ENCODE measurements at regions of chr1 and their contacts with region 1.

Region 1: DNA sequence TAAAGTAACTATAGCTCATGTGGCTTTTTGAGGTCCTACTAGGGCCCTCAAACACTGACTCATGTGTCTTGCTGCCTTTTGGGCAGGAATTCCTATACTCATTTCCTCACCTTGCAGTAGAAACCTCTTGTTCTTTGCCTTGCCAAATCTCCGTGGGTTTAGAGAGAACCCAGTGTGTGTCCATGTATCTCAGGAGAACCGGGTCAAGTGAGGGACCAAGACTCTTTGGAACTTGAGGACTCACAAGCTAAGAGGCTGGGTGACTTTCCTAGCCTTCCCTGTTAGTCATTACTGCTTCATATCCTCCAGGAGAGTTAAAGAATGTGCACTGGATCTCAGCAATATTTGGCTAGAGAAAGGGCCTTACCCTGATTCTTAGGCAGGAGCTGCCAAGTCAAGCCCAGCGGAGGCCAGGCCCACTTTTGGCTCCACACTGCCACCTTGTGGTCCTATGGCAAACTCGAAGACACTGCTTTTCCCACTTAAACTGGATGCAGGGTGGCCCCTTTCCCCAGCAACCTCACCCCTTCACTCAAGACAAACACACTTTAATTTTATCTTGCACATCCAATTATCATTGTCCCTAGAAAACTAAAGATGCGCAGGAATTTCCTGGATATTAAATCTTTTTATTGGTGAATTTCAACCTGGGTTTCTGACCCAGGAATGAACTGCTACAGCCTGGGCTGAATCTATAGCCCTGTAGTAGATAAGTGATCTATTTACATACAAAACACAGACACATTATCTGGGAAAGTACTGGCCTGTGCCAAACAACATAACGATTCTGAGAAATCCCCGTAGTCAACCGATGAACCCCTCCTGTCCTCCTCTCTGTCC is 10.6 kb downstream of the AVPR1B start:
- DNase-seq: peak; percentile 62 to 87
- ATAC-seq: peak; percentile 72 to 91 (median 83)
- H3K4me3 ChIP-seq: no peak overlapping the region
- H3K4me3 Mint-ChIP-seq: no peak overlapping the region
- H3K27ac ChIP-seq: no peak overlapping the region
- H3K27ac Mint-ChIP-seq: no peak overlapping the region
- H3K4me1 ChIP-seq: no peaks in the 10 kb centered on the region
- H3K4me1 Mint-ChIP-seq: no peaks in the 10 kb centered on the region
- H3K27me3 ChIP-seq: no peaks in the 10 kb centered on the region
- H3K27me3 Mint-ChIP-seq: peaks cover 8 to 12% of the 10 kb centered on the region in 2 donors
- CTCF ChIP-seq: peak; percentile 86

Region 2: GRCh38 chr1:205791568-205792180 is 314.9 kb before region 1 on chr1:
- intact Hi-C with region 1: loop called (anchors 1 kb)
- DNase-seq: peak; percentile 46 to 80
- ATAC-seq: peak; percentile 73 to 90 (median 89)
- H3K4me3 ChIP-seq: no peak overlapping the region
- H3K4me3 Mint-ChIP-seq: no peak overlapping the region
- H3K27ac ChIP-seq: no peak overlapping the region
- H3K27ac Mint-ChIP-seq: no peak overlapping the region
- H3K4me1 ChIP-seq: no peaks in the 10 kb centered on the region
- H3K4me1 Mint-ChIP-seq: no peaks in the 10 kb centered on the region
- H3K27me3 ChIP-seq: no peaks in the 10 kb centered on the region
- H3K27me3 Mint-ChIP-seq: no peaks in the 10 kb centered on the region
- CTCF ChIP-seq: peak; percentile 69